OCI-LY7 (cell line): ENCODE measurements at regions of chr6 and their contacts with region 1.

Region 1: GRCh38 chr6:87879132-87879861 is 168.3 kb upstream of the SPACA1 start:
- DNase-seq: peak; percentile 100
- H3K4me3 ChIP-seq: peak overlapping the region; percentile 11
- H3K27ac ChIP-seq: peak overlapping the region; percentile 99
- H3K4me1 ChIP-seq: peaks cover 78% of the 10 kb centered on the region
- CTCF ChIP-seq: no peak

Region 2: DNA sequence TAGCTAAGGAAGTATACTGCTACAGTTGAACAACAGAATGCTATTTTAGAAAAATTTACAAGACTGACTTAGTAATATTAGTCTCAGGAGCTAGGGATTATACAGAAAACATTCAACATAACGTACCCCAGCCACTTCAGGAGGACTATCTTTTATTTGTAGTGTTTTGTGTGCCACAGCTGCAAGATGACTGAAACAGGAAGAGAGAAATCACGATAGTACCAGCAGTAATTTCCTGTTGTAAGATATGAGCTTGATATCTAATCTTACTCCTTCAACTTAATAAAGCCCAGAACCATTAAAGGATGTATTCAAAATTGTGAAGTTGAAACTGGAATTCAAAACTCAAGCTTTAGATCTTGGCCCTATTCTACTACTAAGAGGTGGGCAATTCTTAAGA is 364.5 kb before region 1 on chr6:
- CTCF ChIA-PET with region 1: no interaction called
- POLR2A ChIA-PET with region 1: no interaction called
- intact Hi-C with region 1: no loop called
- DNase-seq: peak; percentile 19
- H3K4me3 ChIP-seq: no peak overlapping the region
- H3K27ac ChIP-seq: no peak overlapping the region
- H3K4me1 ChIP-seq: peaks cover 7% of the 10 kb centered on the region
- CTCF ChIP-seq: no peak

Region 3: DNA sequence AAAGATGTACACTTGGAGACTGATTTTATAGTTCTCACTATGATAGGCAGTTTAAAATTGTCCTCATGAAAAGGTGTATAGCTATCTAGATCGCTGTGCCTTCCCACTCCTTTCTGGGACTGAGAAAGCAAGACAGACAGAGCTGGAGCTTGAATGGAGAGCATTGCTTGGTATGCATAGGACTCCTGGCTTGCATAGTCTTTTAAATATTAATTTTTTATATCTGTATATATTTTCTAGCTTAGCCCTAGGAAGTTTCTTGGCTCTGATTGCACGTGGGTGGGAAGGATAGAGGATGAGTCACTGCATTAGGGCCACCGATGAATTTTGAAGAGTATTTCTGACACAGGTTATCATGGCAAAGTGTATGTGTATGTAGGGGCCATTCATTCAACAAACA is 18.4 kb after region 1 on chr6:
- CTCF ChIA-PET with region 1: interaction called, 3 read pairs
- POLR2A ChIA-PET with region 1: interaction called, 32 read pairs
- intact Hi-C with region 1: no loop called
- DNase-seq: no peak
- H3K4me3 ChIP-seq: no peak overlapping the region
- H3K27ac ChIP-seq: no peak overlapping the region
- H3K4me1 ChIP-seq: peaks cover 56% of the 10 kb centered on the region
- CTCF ChIP-seq: no peak

Region 4: GRCh38 chr6:87907521-87907920 is 28.2 kb after region 1 on chr6:
- CTCF ChIA-PET with region 1: interaction called, 9 read pairs
- POLR2A ChIA-PET with region 1: interaction called, 318 read pairs
- intact Hi-C with region 1: loop called (anchors 1 kb)
- DNase-seq: peak; percentile 72
- H3K4me3 ChIP-seq: no peak overlapping the region
- H3K27ac ChIP-seq: peak overlapping the region; percentile 99
- H3K4me1 ChIP-seq: peaks cover 98% of the 10 kb centered on the region
- CTCF ChIP-seq: no peak

Region 5: GRCh38 chr6:87914637-87915395 is 35.5 kb after region 1 on chr6:
- CTCF ChIA-PET with region 1: interaction called, 5 read pairs
- POLR2A ChIA-PET with region 1: interaction called, 318 read pairs
- intact Hi-C with region 1: loop called (anchors 1 kb)
- DNase-seq: peak; percentile 58
- H3K4me3 ChIP-seq: no peak overlapping the region
- H3K27ac ChIP-seq: peak overlapping the region; percentile 99
- H3K4me1 ChIP-seq: peaks cover 95% of the 10 kb centered on the region
- CTCF ChIP-seq: no peak